ENCODE measurements at regions of chr9 and their contacts with region 1.

Region 1: DNA sequence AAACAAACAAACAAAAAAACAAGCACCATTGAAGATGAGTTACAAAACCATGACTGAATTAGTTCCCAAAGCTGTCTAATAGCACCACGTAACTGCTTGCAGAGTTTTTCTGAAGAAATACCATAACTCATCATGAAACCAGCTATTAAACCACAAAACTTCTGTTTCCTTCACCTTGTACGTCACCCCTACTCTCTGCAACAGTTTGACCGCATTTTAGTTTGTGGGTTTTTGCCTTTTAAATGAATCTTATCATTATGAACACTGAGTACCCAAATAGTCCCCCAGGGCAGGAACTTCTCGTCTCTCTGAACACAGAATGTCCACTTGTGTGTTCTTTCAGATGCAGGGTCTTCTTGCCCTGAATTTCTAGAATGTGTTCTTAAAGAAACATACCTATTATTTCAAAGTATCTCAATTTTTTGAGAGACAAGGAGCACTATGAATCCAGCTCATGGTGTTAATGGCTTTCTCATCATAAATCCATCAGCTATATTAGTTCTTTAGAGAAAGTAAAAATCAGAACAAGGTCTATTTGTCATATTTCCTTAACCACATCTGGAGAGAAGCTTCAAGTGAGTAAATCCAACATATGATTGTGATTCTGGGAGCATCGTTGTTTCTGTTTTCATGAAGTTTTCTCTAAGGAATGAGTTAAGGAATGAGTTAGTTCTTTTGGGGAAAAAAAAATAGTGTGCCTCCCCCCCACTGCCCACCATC is 210.6 kb downstream of the AUH start:
- DNase-seq: peak; percentile 81
- ATAC-seq: peak; percentile 77
- H3K4me3 ChIP-seq: no peak overlapping the region
- H3K4me3 Mint-ChIP-seq: peak overlapping the region; percentile 44
- H3K27ac ChIP-seq: no peak overlapping the region
- H3K27ac Mint-ChIP-seq: peak overlapping the region; percentile 61
- H3K4me1 ChIP-seq: peaks cover 23 to 49% of the 10 kb centered on the region in 2 donors
- H3K4me1 Mint-ChIP-seq: peaks cover 45% of the 10 kb centered on the region
- H3K27me3 ChIP-seq: no peaks in the 10 kb centered on the region
- H3K27me3 Mint-ChIP-seq: peaks cover 5% of the 10 kb centered on the region
- CTCF ChIP-seq: no peak

Region 2: GRCh38 chr9:91164724-91165520 is 13.8 kb after region 1 on chr9:
- CTCF ChIA-PET with region 1: interaction called, 4 read pairs
- POLR2A ChIA-PET with region 1: no interaction called
- intact Hi-C with region 1: loop called (anchors 1 kb)
- DNase-seq: peak; percentile 34
- ATAC-seq: peak; percentile 52
- H3K4me3 ChIP-seq: no peak overlapping the region
- H3K4me3 Mint-ChIP-seq: peak overlapping the region; percentile 63
- H3K27ac ChIP-seq: peak overlapping the region in 1 of 2 donors; percentile 41
- H3K27ac Mint-ChIP-seq: peak overlapping the region; percentile 57
- H3K4me1 ChIP-seq: peaks cover 33 to 35% of the 10 kb centered on the region in 2 donors
- H3K4me1 Mint-ChIP-seq: peaks cover 35% of the 10 kb centered on the region
- H3K27me3 ChIP-seq: no peaks in the 10 kb centered on the region
- H3K27me3 Mint-ChIP-seq: no peaks in the 10 kb centered on the region
- CTCF ChIP-seq: no peak

Region 3: GRCh38 chr9:91193658-91194391 is 42.7 kb after region 1 on chr9:
- CTCF ChIA-PET with region 1: interaction called, 3 read pairs
- POLR2A ChIA-PET with region 1: interaction called, 4 read pairs
- intact Hi-C with region 1: loop called (anchors 5 kb)
- DNase-seq: peak; percentile 76
- ATAC-seq: peak; percentile 69
- H3K4me3 ChIP-seq: peak overlapping the region; percentile 53 to 68 (median 58)
- H3K4me3 Mint-ChIP-seq: peak overlapping the region; percentile 92
- H3K27ac ChIP-seq: peak overlapping the region; percentile 35 to 77
- H3K27ac Mint-ChIP-seq: peak overlapping the region; percentile 88
- H3K4me1 ChIP-seq: peaks cover 27 to 46% of the 10 kb centered on the region in 2 donors
- H3K4me1 Mint-ChIP-seq: peaks cover 28% of the 10 kb centered on the region
- H3K27me3 ChIP-seq: no peaks in the 10 kb centered on the region
- H3K27me3 Mint-ChIP-seq: no peaks in the 10 kb centered on the region
- CTCF ChIP-seq: no peak

Region 4: DNA sequence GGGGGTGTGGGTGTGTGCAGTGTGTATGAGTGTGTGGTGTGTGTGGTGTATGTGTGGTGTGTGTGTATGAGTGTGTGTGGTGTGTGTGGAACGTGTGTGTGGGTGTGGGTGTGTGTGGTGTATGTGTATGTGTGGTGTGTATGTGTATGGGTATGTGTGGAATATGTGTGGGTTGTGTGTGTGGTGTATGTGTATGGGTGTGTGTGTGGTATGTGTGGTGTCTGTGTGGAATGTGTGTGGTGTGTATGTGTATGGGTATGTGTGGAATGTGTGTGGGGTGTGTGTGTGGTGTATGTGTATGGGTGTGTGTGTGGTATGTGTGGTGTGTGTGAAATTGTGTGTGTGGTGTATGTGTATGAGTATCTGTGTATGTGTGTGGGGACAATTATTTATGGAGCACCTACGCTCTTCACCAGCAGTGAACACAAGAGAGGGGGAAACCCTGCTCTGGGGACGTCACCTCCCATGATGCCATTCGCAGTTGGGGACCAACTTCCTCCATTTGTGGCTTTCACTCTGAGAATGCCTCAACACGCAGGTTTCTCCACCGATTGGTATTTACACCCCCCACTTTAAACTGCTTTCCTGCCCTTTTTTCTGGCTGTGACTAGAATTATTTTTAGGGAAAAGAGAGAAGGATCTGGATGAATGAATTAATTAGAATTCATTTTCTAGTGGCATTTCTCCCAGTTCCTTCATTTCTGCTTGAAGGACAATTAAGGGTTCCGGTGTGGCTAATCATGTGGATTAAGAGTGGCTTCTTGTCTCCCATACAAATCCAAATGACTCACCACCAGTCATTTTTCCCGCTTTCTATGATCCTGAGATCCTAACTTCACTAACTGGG is 560.8 kb after region 1 on chr9:
- CTCF ChIA-PET with region 1: no interaction called
- POLR2A ChIA-PET with region 1: no interaction called
- intact Hi-C with region 1: loop called (anchors 2 kb)
- DNase-seq: peak; percentile 90
- ATAC-seq: peak; percentile 92
- H3K4me3 ChIP-seq: peak overlapping the region in 3 of 5 experiments; percentile 18 to 68 (median 47)
- H3K4me3 Mint-ChIP-seq: no peak overlapping the region
- H3K27ac ChIP-seq: peak overlapping the region; percentile 35 to 86
- H3K27ac Mint-ChIP-seq: no peak overlapping the region
- H3K4me1 ChIP-seq: peaks cover 15 to 32% of the 10 kb centered on the region in 2 donors
- H3K4me1 Mint-ChIP-seq: peaks cover 6% of the 10 kb centered on the region
- H3K27me3 ChIP-seq: peaks cover 0 to 4% (median 0%) of the 10 kb centered on the region in 4 experiments
- H3K27me3 Mint-ChIP-seq: no peaks in the 10 kb centered on the region
- CTCF ChIP-seq: no peak